Aorta (tissue), 5 donors: ENCODE measurements at regions of chr9 and their contacts with region 1.

Region 1: GRCh38 chr9:25003686-25004085 is 458.0 kb upstream of the IZUMO3 start:
- DNase-seq: no peak
- ATAC-seq: peak; percentile 54
- H3K4me3 ChIP-seq: no peak overlapping the region
- H3K27ac ChIP-seq: no peak overlapping the region
- H3K4me1 ChIP-seq: no peaks in the 10 kb centered on the region
- H3K27me3 ChIP-seq: no peaks in the 10 kb centered on the region

Region 2: GRCh38 chr9:24939109-24939850 is 64.4 kb before region 1 on chr9:
- intact Hi-C with region 1: no loop called
- DNase-seq: no peak
- ATAC-seq: no peak
- H3K4me3 ChIP-seq: no peak overlapping the region
- H3K27ac ChIP-seq: no peak overlapping the region
- H3K4me1 ChIP-seq: no peaks in the 10 kb centered on the region
- H3K27me3 ChIP-seq: no peaks in the 10 kb centered on the region

Region 3: DNA sequence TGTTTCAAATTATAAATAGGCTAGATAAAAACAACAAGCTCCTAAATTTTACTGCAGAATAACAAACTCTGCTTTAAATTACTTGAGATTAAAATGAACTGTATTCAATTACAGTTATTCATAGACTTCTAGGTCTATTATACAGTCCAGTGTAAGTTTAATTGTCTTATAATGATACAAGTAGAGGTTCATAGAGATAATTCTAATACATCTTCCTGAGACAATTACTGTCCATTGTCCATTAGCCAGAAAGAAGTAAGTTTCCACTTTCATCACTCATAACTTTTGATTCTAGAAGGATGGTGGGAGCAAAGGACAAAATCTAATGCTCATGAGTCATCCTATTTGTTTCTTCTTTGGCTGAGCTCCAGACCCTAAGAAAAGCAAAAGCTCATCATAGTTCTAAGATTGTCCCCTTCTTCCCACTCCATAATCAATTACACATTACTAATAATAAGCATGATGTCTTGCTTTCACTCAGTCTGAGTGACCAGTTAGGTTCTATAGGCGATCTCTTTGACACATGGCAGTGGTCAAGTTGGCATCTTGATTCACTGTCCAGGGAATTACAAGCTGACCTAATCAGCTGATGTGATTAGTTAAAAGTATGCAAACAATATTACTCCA is 44.5 kb after region 1 on chr9:
- intact Hi-C with region 1: loop called in 1 of 2 experiments (anchors 10 kb)
- DNase-seq: no peak
- ATAC-seq: no peak
- H3K4me3 ChIP-seq: no peak overlapping the region
- H3K27ac ChIP-seq: no peak overlapping the region
- H3K4me1 ChIP-seq: no peaks in the 10 kb centered on the region
- H3K27me3 ChIP-seq: no peaks in the 10 kb centered on the region

Region 4: DNA sequence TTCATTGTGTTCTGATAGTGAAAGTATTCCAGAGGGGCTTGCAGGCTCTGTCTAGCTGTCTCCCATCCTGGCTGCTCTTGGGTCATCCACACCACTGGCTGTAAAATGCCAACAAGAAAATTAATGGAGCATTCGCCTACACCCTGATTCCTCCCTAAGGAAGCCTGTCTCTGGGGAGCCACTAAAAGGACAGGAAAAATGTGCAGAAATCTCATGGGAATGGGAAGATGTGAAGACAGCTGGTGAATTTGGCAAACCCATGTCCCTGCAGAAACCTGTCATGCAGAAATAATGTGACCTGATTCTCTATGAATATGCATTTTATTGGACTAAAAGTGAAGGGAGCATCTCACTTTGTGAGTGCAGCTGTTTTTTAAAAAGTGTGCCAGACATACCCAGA is 409.0 kb after region 1 on chr9:
- intact Hi-C with region 1: no loop called
- DNase-seq: no peak
- ATAC-seq: no peak
- H3K4me3 ChIP-seq: no peak overlapping the region
- H3K27ac ChIP-seq: no peak overlapping the region
- H3K4me1 ChIP-seq: no peaks in the 10 kb centered on the region
- H3K27me3 ChIP-seq: no peaks in the 10 kb centered on the region